Activated naive CD4-positive, alpha-beta T cell treated with anti-CD3 and anti-CD28 coated beads, Interleukin-2, amount 10 ng/mL, durations not matched to agents 7 days and 5 days (primary cell): ENCODE measurements at regions of chr9 and their contacts with region 1.

Region 1: GRCh38 chr9:137064027-137064879 is 6.1 kb downstream of the SAPCD2 start:
- DNase-seq: peak; percentile 69
- H3K4me3 Mint-ChIP-seq: no peak overlapping the region
- H3K27ac Mint-ChIP-seq: no peak overlapping the region
- H3K4me1 Mint-ChIP-seq: peaks cover 16% of the 10 kb centered on the region
- H3K27me3 Mint-ChIP-seq: peaks cover 3% of the 10 kb centered on the region

Region 2: GRCh38 chr9:137052998-137053943 is 11.0 kb before region 1 on chr9:
- CTCF ChIA-PET with region 1: interaction called, 103 read pairs
- DNase-seq: no peak
- H3K4me3 Mint-ChIP-seq: no peak overlapping the region
- H3K27ac Mint-ChIP-seq: no peak overlapping the region
- H3K4me1 Mint-ChIP-seq: peaks cover 6% of the 10 kb centered on the region
- H3K27me3 Mint-ChIP-seq: peaks cover 91% of the 10 kb centered on the region